ENCODE measurements at regions of chr13 and their contacts with region 1.

Region 1: DNA sequence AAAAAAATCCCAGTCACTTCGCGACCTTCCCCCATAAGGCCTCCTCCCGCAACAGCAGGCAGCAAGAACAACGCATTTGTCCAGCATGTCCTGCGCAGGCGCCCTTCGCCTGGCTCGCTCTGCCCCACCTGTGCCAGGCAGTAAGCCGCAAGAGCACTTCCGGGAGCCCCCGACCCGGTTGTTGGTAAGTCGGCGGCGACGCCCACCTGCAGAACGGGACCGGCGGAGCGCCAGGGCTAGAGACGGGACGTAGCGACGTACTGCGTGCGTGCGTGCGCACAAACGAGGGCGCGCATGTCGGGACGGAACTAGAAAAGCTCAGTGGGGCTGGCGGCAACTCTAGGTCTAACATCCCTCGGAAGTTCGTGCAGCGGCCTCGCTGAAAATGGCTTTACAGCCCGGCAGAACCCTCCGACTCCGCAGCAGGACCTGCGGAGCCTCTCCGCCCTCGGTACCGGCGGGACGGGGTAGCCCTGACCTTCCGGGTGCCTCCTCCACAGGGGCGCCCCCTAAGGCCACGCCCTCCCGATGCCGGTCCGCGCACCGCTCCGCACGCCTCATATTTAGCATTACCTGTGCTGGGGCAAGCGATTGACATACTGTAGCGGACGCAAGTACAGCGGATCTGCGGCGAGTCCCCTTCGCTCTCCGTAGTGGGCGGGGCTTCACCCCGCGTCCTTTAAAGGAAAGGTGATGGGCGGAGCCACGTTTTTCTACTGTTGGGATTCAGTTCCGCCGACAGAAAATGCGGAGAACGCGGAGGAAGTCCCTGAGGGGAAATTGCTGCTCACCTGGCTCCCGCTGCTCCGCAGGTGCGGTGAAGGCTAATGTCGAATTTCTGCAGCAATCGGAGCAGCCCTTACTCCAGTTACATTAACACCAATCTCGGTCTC is at the start of gene MTIF3:
- DNase-seq: peak; percentile 97 to 98 (median 98)
- H3K4me3 ChIP-seq: peak within 1 kb of the TSS; percentile 53 to 94
- H3K4me3 Mint-ChIP-seq: peak within 1 kb of the TSS; percentile 92 to 97 (median 94)
- H3K27ac ChIP-seq: peak within 1 kb of the TSS; percentile 91
- H3K27ac Mint-ChIP-seq: peak within 1 kb of the TSS; percentile 95 to 99 (median 97)
- H3K4me1 ChIP-seq: peaks cover 63% of the 10 kb centered on the region
- H3K4me1 Mint-ChIP-seq: peaks cover 31 to 77% (median 56%) of the 10 kb centered on the region in 4 donors
- H3K27me3 ChIP-seq: no peaks in the 10 kb centered on the region
- H3K27me3 Mint-ChIP-seq: no peaks in the 10 kb centered on the region
- total RNA-seq, gene MTIF3: 86.4 to 92.4 TPM

Region 2: GRCh38 chr13:26771796-26772195 is 678.4 kb before region 1 on chr13:
- CTCF ChIA-PET with region 1: no interaction called
- POLR2A ChIA-PET with region 1: no interaction called
- intact Hi-C with region 1: no loop called
- DNase-seq: no peak
- H3K4me3 ChIP-seq: no peak overlapping the region
- H3K4me3 Mint-ChIP-seq: no peak overlapping the region
- H3K27ac ChIP-seq: no peak overlapping the region
- H3K27ac Mint-ChIP-seq: peak overlapping the region in 1 of 7 donors; percentile 3
- H3K4me1 ChIP-seq: no peaks in the 10 kb centered on the region
- H3K4me1 Mint-ChIP-seq: peaks cover 0 to 2% (median 0%) of the 10 kb centered on the region in 4 donors
- H3K27me3 ChIP-seq: no peaks in the 10 kb centered on the region
- H3K27me3 Mint-ChIP-seq: peaks cover 7% of the 10 kb centered on the region in 2 donors

Region 3: GRCh38 chr13:27171827-27172494 is 278.2 kb before region 1 on chr13:
- CTCF ChIA-PET with region 1: no interaction called
- POLR2A ChIA-PET with region 1: no interaction called
- intact Hi-C with region 1: loop called (anchors 1 kb)
- DNase-seq: peak; percentile 92 to 94 (median 93)
- H3K4me3 ChIP-seq: peak overlapping the region; percentile 15 to 63
- H3K4me3 Mint-ChIP-seq: peak overlapping the region; percentile 82 to 96 (median 90)
- H3K27ac ChIP-seq: peak overlapping the region; percentile 95
- H3K27ac Mint-ChIP-seq: peak overlapping the region; percentile 84 to 99 (median 96)
- H3K4me1 ChIP-seq: peaks cover 37% of the 10 kb centered on the region
- H3K4me1 Mint-ChIP-seq: peaks cover 31 to 46% (median 39%) of the 10 kb centered on the region in 4 donors
- H3K27me3 ChIP-seq: no peaks in the 10 kb centered on the region
- H3K27me3 Mint-ChIP-seq: no peaks in the 10 kb centered on the region

Region 4: DNA sequence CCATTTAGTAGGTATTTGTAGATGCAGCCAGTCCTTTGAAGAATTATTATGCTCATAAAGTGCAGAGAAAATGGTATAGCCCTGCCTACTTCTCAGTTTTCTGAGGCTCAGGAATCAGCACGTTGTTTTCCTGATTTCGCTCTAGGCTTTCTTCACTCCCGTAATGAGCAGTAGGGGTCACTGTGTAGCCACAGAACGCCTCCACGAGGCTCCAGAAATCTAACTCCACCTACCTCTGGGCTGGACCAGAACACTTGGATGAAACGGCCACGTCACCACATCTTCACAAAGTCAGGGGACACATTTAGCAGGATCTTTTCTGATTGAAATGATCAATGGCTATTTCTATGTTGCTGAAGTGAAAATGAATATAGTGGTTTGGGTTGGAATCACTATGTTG is 75.5 kb before region 1 on chr13:
- CTCF ChIA-PET with region 1: no interaction called
- POLR2A ChIA-PET with region 1: no interaction called
- intact Hi-C with region 1: loop called (anchors 2 kb)
- DNase-seq: peak; percentile 46 to 56 (median 49)
- H3K4me3 ChIP-seq: no peak overlapping the region
- H3K4me3 Mint-ChIP-seq: no peak overlapping the region
- H3K27ac ChIP-seq: no peak overlapping the region
- H3K27ac Mint-ChIP-seq: no peak overlapping the region
- H3K4me1 ChIP-seq: no peaks in the 10 kb centered on the region
- H3K4me1 Mint-ChIP-seq: peaks cover 2 to 10% (median 5%) of the 10 kb centered on the region in 4 donors
- H3K27me3 ChIP-seq: no peaks in the 10 kb centered on the region
- H3K27me3 Mint-ChIP-seq: peaks cover 12 to 22% of the 10 kb centered on the region in 2 donors

Region 5: GRCh38 chr13:27424246-27425157 is 25.7 kb before region 1 on chr13 and contains the start of gene GTF3A:
- CTCF ChIA-PET with region 1: interaction called, 109 read pairs
- POLR2A ChIA-PET with region 1: interaction called, 588 read pairs
- intact Hi-C with region 1: loop called (anchors 1 kb)
- DNase-seq: peak; percentile 85 to 96 (median 92)
- H3K4me3 ChIP-seq: peak within 1 kb of the TSS; percentile 66 to 89
- H3K4me3 Mint-ChIP-seq: peak within 1 kb of the TSS; percentile 87 to 96 (median 94)
- H3K27ac ChIP-seq: peak within 1 kb of the TSS; percentile 95
- H3K27ac Mint-ChIP-seq: peak within 1 kb of the TSS; percentile 89 to 99 (median 97)
- H3K4me1 ChIP-seq: peaks cover 51% of the 10 kb centered on the region
- H3K4me1 Mint-ChIP-seq: peaks cover 27 to 53% (median 40%) of the 10 kb centered on the region in 4 donors
- H3K27me3 ChIP-seq: no peaks in the 10 kb centered on the region
- H3K27me3 Mint-ChIP-seq: no peaks in the 10 kb centered on the region
- total RNA-seq, gene GTF3A: 225 to 236 TPM

Region 6: DNA sequence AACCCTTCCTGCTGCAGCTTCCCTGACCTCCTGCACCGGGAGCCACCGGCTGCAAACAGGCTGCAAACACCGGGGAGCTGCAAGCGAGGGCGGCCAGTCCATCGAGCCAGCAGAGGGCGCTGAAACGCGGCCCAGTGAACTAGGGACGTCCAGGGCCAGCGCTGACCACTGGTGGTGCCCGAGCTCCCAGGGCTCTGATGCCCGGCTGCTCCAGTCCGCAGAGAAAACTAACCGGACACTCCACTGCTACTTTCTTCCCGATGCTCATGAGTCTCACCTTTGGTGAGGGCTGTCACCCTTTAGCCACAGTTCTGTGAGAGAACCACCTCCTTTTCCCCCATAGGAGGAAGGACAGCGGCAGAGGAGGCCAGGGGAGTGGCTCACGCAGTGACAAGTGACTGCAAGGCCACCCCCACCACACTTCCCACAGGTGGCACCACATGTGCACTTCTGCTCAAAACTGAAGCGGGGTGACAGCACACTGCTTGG is 83.0 kb after region 1 on chr13:
- CTCF ChIA-PET with region 1: interaction called, 8 read pairs
- POLR2A ChIA-PET with region 1: no interaction called
- intact Hi-C with region 1: loop called (anchors 1 kb)
- DNase-seq: peak; percentile 21 to 53 (median 33)
- H3K4me3 ChIP-seq: no peak overlapping the region
- H3K4me3 Mint-ChIP-seq: peak overlapping the region in 3 of 8 donors; percentile 21 to 57 (median 41)
- H3K27ac ChIP-seq: no peak overlapping the region
- H3K27ac Mint-ChIP-seq: no peak overlapping the region
- H3K4me1 ChIP-seq: peaks cover 8% of the 10 kb centered on the region
- H3K4me1 Mint-ChIP-seq: peaks cover 6 to 12% (median 8%) of the 10 kb centered on the region in 4 donors
- H3K27me3 ChIP-seq: no peaks in the 10 kb centered on the region
- H3K27me3 Mint-ChIP-seq: peaks cover 0 to 1% of the 10 kb centered on the region in 2 donors

Region 7: GRCh38 chr13:27712421-27712820 is 262.2 kb after region 1 on chr13:
- CTCF ChIA-PET with region 1: interaction called, 3 read pairs
- POLR2A ChIA-PET with region 1: no interaction called
- intact Hi-C with region 1: loop called (anchors 1 kb)
- DNase-seq: peak in 3 of 5 donors; percentile 13 to 22 (median 17)
- H3K4me3 ChIP-seq: no peak overlapping the region
- H3K4me3 Mint-ChIP-seq: no peak overlapping the region
- H3K27ac ChIP-seq: no peak overlapping the region
- H3K27ac Mint-ChIP-seq: no peak overlapping the region
- H3K4me1 ChIP-seq: no peaks in the 10 kb centered on the region
- H3K4me1 Mint-ChIP-seq: no peaks in the 10 kb centered on the region
- H3K27me3 ChIP-seq: no peaks in the 10 kb centered on the region
- H3K27me3 Mint-ChIP-seq: peaks cover 13 to 19% of the 10 kb centered on the region in 2 donors

Region 8: GRCh38 chr13:28658796-28659620 is 1208.8 kb after region 1 on chr13 and contains the start of gene POMP:
- CTCF ChIA-PET with region 1: no interaction called
- POLR2A ChIA-PET with region 1: no interaction called
- intact Hi-C with region 1: loop called (anchors 10 kb)
- DNase-seq: peak; percentile 90 to 94 (median 93)
- H3K4me3 ChIP-seq: peak within 1 kb of the TSS; percentile 76 to 93
- H3K4me3 Mint-ChIP-seq: peak within 1 kb of the TSS; percentile 95 to 99 (median 98)
- H3K27ac ChIP-seq: peak within 1 kb of the TSS; percentile 95
- H3K27ac Mint-ChIP-seq: peak within 1 kb of the TSS; percentile 96 to 100 (median 98)
- H3K4me1 ChIP-seq: peaks cover 40% of the 10 kb centered on the region
- H3K4me1 Mint-ChIP-seq: peaks cover 34 to 63% (median 54%) of the 10 kb centered on the region in 4 donors
- H3K27me3 ChIP-seq: no peaks in the 10 kb centered on the region
- H3K27me3 Mint-ChIP-seq: no peaks in the 10 kb centered on the region
- total RNA-seq, gene POMP: 23.0 to 24.5 TPM

Measured in CD4-positive, alpha-beta memory T cell (primary cell).